AG04449 (cell line): ENCODE measurements at regions of chr4 and their contacts with region 1.

Region 1: DNA sequence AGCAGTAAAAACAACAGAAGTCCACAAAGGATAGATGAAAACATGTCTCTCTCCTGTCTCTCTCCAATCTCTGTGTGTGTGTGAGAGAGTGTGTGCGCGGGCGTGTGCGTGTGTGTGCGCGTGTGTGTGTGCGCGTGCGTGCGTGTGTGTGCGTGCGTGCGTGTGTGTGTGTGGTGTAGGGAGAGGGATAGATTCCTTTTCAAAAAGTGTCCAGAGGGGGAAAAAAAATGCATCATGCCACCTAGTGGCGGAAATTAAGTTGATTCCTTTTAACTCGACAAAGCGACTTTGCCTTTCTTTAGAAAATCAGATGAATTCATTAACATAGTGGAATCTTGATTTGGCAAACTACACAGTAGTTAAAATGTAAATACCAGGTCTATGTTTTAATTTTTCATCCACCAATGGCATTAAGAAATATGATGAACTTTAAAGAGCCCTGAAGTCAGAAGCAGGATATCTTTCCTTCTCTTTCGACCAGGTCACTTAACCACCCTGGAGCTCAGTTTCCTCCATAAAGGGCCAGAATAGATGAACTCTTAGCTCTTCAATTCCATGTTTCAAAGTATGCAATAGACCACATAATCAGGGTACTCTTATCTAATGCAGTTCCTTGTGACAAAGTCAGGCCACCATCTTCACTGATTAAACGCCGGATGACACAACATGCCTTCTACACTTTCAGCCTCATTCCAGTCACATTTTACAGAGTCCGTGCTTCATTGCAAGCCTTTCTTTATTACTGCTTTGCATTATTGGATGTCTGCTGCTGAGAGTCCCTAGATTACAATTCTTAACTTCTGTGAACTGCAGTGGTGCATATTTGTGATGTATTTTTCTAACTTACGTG is 162.8 kb downstream of the FBXO8 start:
- DNase-seq: peak; percentile 19
- H3K4me3 ChIP-seq: peak overlapping the region; percentile 56
- CTCF ChIP-seq: peak; percentile 31

Region 2: GRCh38 chr4:174036111-174036510 is 84.6 kb before region 1 on chr4:
- CTCF ChIA-PET with region 1: no interaction called
- POLR2A ChIA-PET with region 1: no interaction called
- DNase-seq: no peak
- H3K4me3 ChIP-seq: no peak overlapping the region
- CTCF ChIP-seq: no peak

Region 3: DNA sequence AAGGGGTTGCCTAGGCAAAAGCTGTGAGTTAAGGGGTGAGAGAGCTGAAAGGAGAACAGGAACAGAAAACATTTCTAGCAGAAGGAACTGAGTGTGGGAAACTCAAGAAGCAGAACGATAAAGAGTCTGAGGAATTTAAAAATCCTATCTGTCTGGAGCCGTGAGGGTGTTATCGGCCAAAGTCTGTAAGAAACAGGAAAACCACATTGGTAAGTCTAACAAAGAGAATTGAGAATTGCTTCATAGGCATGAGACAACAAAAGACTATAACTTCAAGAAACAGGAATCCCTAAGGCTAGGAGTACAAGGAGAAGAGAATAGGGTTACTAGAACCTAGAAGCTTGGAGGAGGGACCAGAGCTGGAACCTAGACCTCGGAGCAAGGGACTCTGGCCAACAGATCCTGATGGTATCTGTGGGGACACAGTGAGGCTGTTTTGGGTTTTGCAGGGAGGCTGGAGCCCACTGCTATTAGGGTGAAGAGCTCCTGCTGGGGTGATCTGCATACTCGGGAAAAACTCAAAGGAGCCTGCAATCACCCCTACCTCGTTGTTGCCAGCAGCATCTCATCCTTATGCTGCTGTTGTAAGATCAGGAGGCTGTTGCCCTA is 12.8 kb before region 1 on chr4:
- CTCF ChIA-PET with region 1: interaction called, 10 read pairs
- POLR2A ChIA-PET with region 1: no interaction called
- DNase-seq: no peak
- H3K4me3 ChIP-seq: no peak overlapping the region
- CTCF ChIP-seq: no peak

Region 4: GRCh38 chr4:174134361-174134760 is 13.7 kb after region 1 on chr4:
- CTCF ChIA-PET with region 1: interaction called, 11 read pairs
- POLR2A ChIA-PET with region 1: no interaction called
- DNase-seq: no peak
- H3K4me3 ChIP-seq: no peak overlapping the region
- CTCF ChIP-seq: no peak